SK-N-SH (cell line): ENCODE measurements at regions of chr7 and their contacts with region 1.

Region 1: DNA sequence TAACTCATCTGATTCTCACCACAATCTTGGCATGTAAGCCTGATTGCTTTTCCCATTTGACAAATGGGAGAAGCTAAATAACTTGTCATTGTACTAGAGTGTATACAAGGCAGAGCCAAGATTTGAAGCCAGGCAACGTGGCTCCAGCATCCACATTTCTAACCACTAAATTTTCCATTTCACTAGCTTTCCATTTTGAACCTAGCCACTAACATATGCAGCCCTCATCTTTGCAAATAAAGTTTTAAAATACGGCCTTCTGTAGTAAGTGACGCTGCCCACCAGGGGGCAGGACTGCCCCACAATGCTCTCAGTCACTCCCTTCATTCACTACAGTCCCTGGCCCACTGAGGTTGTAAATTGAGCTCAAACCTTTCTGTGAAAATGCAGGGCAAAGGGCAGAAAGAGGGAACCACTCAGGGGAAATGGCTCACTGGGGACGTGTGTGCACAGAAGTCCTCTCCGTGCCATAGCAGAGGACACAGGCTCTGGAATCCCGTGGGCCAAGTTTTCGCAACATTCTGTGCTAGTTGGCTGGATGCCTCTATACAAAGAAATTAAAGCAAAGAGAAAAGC is 315.7 kb downstream of the TNS3 start:
- DNase-seq: peak; percentile 83
- H3K4me3 ChIP-seq: no peak overlapping the region; a peak in 1 of 4 replicates
- H3K27ac ChIP-seq: no peak overlapping the region
- H3K4me1 ChIP-seq: peaks cover 0 to 2% of the 10 kb centered on the region in 2 experiments; a peak in 1 of 4 replicates
- H3K27me3 ChIP-seq: no peaks in the 10 kb centered on the region
- CTCF ChIP-seq: peak; percentile 99
- EP300 ChIP-seq: no peak
- RAD21 ChIP-seq: peak; percentile 100

Region 2: DNA sequence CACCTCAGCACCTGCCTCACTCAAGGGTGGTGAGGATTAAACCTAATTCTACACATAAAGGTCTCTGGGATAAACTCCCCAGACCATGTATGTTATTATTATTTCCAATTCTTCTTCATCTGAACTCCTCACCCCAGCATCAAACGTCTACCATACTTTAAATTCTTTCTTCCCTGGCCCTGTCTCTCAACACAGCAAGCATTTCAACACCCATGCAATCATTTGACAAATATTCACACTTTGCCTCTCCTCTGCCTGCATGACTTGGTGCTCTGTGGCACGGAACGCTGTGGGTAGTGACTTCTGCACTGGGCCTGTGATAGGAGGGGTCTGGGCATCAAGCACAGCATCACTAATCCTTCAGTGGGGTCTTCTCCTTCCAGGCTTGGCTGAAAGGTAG is 175.1 kb before region 1 on chr7:
- CTCF ChIA-PET with region 1: no interaction called
- POLR2A ChIA-PET with region 1: no interaction called
- DNase-seq: no peak
- H3K4me3 ChIP-seq: no peak overlapping the region
- H3K27ac ChIP-seq: no peak overlapping the region
- H3K4me1 ChIP-seq: peaks cover 2 to 10% of the 10 kb centered on the region in 2 experiments; a peak in 2 of 4 replicates
- H3K27me3 ChIP-seq: no peaks in the 10 kb centered on the region
- CTCF ChIP-seq: no peak
- EP300 ChIP-seq: no peak
- RAD21 ChIP-seq: no peak

Region 3: GRCh38 chr7:47247132-47247531 is 19.1 kb before region 1 on chr7:
- CTCF ChIA-PET with region 1: interaction called, 139 read pairs
- POLR2A ChIA-PET with region 1: no interaction called
- DNase-seq: no peak
- H3K4me3 ChIP-seq: no peak overlapping the region
- H3K27ac ChIP-seq: no peak overlapping the region
- H3K4me1 ChIP-seq: no peaks in the 10 kb centered on the region
- H3K27me3 ChIP-seq: no peaks in the 10 kb centered on the region
- CTCF ChIP-seq: no peak
- EP300 ChIP-seq: no peak
- RAD21 ChIP-seq: no peak

Region 4: DNA sequence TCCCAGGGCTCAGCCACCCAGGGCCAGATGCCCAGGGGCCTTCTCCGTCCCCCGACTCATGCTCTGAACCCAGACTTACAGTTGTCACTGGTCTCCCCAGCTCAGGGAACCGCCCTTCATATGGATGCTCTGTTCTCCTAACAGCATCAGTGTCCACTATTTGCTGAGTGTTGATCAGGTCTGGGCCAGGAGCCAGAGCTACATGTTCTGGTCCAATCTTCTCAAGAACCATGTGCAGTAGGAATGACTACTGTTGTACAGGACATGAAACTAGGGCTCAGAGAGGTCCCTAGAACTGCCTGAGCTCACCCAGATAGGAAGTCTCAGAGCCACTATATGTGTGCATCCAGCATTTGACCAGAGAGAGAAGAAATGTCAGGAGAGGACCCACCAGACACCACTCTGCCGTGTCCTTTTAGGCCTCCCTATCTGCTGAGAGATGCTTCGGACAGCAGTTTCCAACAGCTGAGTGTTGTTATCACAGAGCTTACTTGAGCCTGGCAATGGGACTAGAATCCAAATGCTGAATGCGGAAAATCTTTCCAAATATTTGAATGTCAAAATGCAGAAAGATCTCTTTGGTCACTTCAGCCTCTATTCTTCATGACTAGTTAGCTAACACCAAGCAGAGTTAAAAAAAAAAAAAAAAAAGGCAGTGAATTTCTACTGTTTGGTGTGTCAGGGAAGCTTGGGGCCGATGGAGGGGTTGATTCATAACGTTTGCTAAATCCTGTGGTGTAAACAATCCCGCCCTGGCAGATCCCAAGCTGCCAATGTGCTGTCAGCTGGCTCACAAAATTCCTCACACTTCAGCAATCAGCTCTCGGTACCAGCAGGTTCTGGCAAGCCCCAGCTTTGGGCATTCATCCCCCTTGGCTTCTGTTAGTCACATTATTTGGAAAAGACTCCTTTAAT is 69.6 kb after region 1 on chr7:
- CTCF ChIA-PET with region 1: interaction called, 13 read pairs
- POLR2A ChIA-PET with region 1: no interaction called
- DNase-seq: no peak
- H3K4me3 ChIP-seq: no peak overlapping the region
- H3K27ac ChIP-seq: no peak overlapping the region
- H3K4me1 ChIP-seq: peaks cover 0 to 11% of the 10 kb centered on the region in 2 experiments; a peak in 2 of 4 replicates
- H3K27me3 ChIP-seq: no peaks in the 10 kb centered on the region
- CTCF ChIP-seq: no peak
- EP300 ChIP-seq: no peak
- RAD21 ChIP-seq: no peak

Region 5: DNA sequence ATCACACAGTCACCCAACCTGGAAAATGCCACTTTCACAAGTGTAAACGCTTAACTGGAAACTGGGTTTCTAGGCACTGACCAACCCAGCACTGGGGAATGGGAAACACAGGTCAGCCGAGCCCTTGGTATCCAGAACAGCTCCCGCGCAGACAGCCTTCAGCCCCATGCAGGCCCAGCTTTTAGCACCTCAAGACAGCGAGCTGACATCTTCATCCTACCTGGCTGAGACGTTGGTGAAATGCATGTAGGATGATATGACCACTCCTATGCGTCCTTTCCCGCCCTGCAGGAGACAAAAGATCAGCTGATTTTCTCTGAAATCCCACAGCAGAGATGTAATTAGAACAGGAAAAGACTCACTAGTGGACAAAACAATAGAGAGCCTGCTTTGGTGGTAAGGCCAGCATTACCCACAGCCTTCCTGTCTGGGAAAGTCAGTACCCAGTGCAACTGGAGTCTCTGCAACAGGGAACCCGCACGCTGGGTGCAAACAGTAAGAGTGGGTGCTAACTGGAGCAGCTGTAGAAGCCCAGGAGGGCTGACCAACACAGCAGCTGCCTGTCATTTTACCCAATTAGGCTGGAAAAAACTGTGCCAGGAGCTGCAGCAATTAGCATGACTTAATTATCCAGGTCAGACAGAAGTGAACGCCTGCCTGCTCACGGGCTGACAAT is 162.0 kb after region 1 on chr7:
- CTCF ChIA-PET with region 1: interaction called, 151 read pairs
- POLR2A ChIA-PET with region 1: interaction called, 3 read pairs
- DNase-seq: peak; percentile 70
- H3K4me3 ChIP-seq: no peak overlapping the region
- H3K27ac ChIP-seq: peak overlapping the region in 1 of 2 experiments; percentile 90; a peak in 2 of 4 replicates
- H3K4me1 ChIP-seq: peaks cover 0 to 20% of the 10 kb centered on the region in 2 experiments; a peak in 2 of 4 replicates
- H3K27me3 ChIP-seq: no peaks in the 10 kb centered on the region
- CTCF ChIP-seq: no peak
- EP300 ChIP-seq: peak in 1 of 2 experiments; percentile 94; a peak in 2 of 4 replicates
- RAD21 ChIP-seq: no peak; the same call in 1 of the 2 replicates

Region 6: DNA sequence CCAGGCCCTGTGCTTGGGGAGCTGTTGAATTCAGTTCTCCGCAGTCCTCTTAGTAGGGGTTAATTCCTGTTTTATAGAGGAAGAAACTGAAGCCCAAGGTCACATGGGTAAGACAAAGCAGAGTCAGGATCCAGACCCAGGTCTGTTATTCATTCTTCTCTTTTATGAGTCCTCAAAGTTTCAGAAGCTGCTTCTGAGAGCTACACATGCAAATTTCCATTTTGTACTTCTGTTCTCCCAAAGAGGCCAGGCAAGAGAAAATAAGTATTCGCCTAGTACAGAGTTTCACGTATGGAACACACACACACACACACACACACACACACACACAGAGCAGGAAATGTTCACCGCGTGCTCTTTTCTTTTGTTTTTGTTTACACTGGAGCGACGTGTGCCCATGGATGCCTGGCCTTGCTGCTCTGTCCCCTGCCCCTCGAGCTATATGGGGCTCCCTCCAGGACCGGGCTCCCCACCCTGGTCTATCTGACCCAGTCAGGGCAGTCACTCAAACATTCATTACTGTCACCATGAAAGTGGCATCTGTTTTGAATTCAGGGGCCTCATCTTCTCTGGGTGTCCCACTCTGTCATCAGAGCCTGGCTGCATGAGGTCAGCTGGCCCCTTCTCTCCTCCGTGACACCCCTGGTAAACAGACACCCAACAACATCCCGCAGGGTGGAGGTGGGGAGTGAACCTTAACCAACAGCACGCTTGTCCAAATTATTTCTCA is 231.3 kb after region 1 on chr7:
- CTCF ChIA-PET with region 1: interaction called, 10 read pairs
- POLR2A ChIA-PET with region 1: no interaction called
- DNase-seq: peak; percentile 60
- H3K4me3 ChIP-seq: no peak overlapping the region
- H3K27ac ChIP-seq: no peak overlapping the region; a peak in 1 of 4 replicates
- H3K4me1 ChIP-seq: peaks cover 22 to 52% of the 10 kb centered on the region in 2 experiments
- H3K27me3 ChIP-seq: no peaks in the 10 kb centered on the region
- CTCF ChIP-seq: no peak
- EP300 ChIP-seq: no peak
- RAD21 ChIP-seq: no peak

Region 7: DNA sequence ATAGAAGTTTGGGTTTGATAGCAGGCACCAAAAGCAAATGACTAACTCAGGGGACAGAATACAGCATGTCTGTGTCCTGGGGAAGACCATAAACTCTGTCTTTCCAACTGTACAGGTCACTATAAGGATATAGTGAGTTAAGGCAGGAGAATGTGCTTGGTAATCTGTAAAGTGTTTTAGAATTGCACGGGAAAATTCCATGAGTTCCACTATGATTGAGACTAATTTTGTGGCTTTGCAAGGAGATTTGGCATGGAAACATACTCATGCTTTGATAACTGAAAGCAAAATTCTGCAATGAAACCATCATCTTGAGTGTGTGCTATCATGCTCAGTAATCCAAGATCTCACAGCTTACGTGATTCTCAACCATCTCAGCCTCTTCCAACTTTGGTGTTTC is 529.4 kb after region 1 on chr7:
- CTCF ChIA-PET with region 1: interaction called, 17 read pairs
- POLR2A ChIA-PET with region 1: no interaction called
- DNase-seq: no peak
- H3K4me3 ChIP-seq: peak overlapping the region; percentile 3 to 4; a peak in 3 of 4 replicates
- H3K27ac ChIP-seq: peak overlapping the region; percentile 64 to 81
- H3K4me1 ChIP-seq: peaks cover 0 to 3% of the 10 kb centered on the region in 2 experiments; a peak in 3 of 4 replicates
- H3K27me3 ChIP-seq: no peaks in the 10 kb centered on the region
- CTCF ChIP-seq: no peak
- EP300 ChIP-seq: peak; percentile 56 to 85; a peak in 3 of 4 replicates
- RAD21 ChIP-seq: no peak

Region 8: GRCh38 chr7:47945261-47946001 is 679.2 kb after region 1 on chr7:
- CTCF ChIA-PET with region 1: interaction called, 18 read pairs
- POLR2A ChIA-PET with region 1: no interaction called
- DNase-seq: peak; percentile 74
- H3K4me3 ChIP-seq: no peak overlapping the region
- H3K27ac ChIP-seq: no peak overlapping the region
- H3K4me1 ChIP-seq: peaks cover 24 to 35% of the 10 kb centered on the region in 2 experiments
- H3K27me3 ChIP-seq: no peaks in the 10 kb centered on the region
- CTCF ChIP-seq: peak; percentile 99
- EP300 ChIP-seq: no peak
- RAD21 ChIP-seq: peak; percentile 93